CD4-positive, alpha-beta memory T cell (primary cell): ENCODE measurements at regions of chr7 and their contacts with region 1.

Region 1: DNA sequence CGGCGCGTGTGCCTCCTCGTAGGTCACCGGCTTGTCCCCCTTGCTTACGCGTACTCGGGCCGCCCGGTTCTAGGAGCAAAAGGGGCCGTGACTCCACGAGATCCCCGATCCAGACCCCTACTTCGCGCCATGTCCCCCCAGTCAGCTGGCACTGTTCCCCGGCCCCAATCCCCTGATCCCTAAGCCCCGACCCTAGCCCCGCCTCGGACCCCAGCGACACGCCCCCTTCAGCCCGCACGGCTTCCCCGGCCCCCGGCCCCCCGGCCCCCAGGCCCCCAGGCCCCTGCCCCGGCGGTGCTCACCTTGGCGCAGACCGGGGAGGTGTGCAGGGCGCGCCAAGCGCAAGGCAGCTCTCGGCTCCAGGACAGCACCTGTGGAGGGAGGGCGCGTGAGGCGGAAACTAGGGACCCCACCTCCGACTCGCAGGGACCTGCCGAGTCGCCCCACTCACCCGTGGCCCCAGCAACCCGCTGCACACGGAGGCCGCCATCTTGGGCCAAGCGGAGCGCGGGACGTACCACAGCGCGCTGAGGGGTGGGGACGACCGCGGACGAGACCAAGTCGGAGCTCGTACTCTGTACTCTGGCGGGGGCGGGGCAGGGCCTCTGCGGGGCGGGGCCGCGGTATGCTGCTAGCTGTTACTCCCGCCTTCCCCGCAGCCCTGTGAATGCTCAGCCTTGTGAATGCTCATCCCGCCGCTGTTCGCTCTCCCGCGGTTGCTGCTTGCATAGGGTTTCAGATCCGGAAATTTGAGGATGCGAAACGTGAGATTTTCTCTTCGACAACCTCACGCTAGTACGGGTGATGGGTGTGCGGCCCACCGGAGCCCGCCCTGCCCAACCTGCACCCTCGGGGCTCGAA is at the start of gene MRPS24:
- DNase-seq: peak; percentile 91 to 94 (median 91)
- H3K4me3 ChIP-seq: peak within 1 kb of the TSS; percentile 79 to 86
- H3K4me3 Mint-ChIP-seq: peak within 1 kb of the TSS; percentile 91 to 97 (median 93)
- H3K27ac ChIP-seq: peak within 1 kb of the TSS; percentile 54
- H3K27ac Mint-ChIP-seq: peak within 1 kb of the TSS; percentile 89 to 95 (median 94)
- H3K4me1 ChIP-seq: peaks cover 20% of the 10 kb centered on the region
- H3K4me1 Mint-ChIP-seq: peaks cover 8 to 31% (median 18%) of the 10 kb centered on the region in 4 donors
- H3K27me3 ChIP-seq: no peaks in the 10 kb centered on the region
- H3K27me3 Mint-ChIP-seq: no peaks in the 10 kb centered on the region
- total RNA-seq, gene MRPS24: 52.2 to 52.7 TPM

Region 2: GRCh38 chr7:43553999-43554398 is 315.2 kb before region 1 on chr7:
- CTCF ChIA-PET with region 1: no interaction called
- POLR2A ChIA-PET with region 1: no interaction called
- intact Hi-C with region 1: no loop called
- DNase-seq: peak in 2 of 5 donors; percentile 6 to 35
- H3K4me3 ChIP-seq: no peak overlapping the region
- H3K4me3 Mint-ChIP-seq: peak overlapping the region in 6 of 8 donors; percentile 4 to 84 (median 56)
- H3K27ac ChIP-seq: no peak overlapping the region
- H3K27ac Mint-ChIP-seq: peak overlapping the region in 3 of 7 donors; percentile 17 to 86 (median 72)
- H3K4me1 ChIP-seq: peaks cover 26% of the 10 kb centered on the region
- H3K4me1 Mint-ChIP-seq: peaks cover 15 to 29% (median 17%) of the 10 kb centered on the region in 4 donors
- H3K27me3 ChIP-seq: no peaks in the 10 kb centered on the region
- H3K27me3 Mint-ChIP-seq: peaks cover 7 to 8% of the 10 kb centered on the region in 2 donors

Region 3: DNA sequence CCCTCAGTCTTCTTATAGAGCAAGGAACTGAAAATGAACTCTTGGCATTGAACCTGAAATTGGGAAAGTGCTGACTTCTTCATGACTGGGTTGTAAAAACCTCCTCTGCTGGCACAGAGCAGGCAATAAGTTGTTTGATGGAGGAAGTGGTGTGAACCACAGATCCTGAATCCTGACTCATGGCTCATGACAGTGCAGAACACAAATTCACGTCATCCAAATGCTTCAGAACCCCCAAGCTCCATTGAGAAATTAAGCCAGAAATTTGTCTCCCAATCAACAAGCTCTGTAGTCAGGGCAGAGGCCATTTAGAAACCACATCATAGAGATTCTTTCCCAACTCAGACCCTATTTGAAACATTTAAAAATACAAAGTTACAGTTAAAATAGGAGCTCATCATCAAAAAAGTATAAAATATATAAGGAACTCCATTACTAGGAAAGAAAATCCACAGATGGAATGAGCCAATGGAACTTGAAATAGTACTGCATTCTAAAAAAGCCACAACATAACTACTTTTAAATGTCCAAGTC is 296.7 kb before region 1 on chr7:
- CTCF ChIA-PET with region 1: no interaction called
- POLR2A ChIA-PET with region 1: no interaction called
- intact Hi-C with region 1: no loop called
- DNase-seq: peak in 2 of 5 donors; percentile 21 to 46
- H3K4me3 ChIP-seq: no peak overlapping the region
- H3K4me3 Mint-ChIP-seq: no peak overlapping the region
- H3K27ac ChIP-seq: no peak overlapping the region
- H3K27ac Mint-ChIP-seq: peak overlapping the region in 2 of 7 donors; percentile 23 to 51
- H3K4me1 ChIP-seq: peaks cover 5% of the 10 kb centered on the region
- H3K4me1 Mint-ChIP-seq: peaks cover 3 to 5% (median 4%) of the 10 kb centered on the region in 4 donors
- H3K27me3 ChIP-seq: no peaks in the 10 kb centered on the region
- H3K27me3 Mint-ChIP-seq: no peaks in the 10 kb centered on the region

Region 4: GRCh38 chr7:43824963-43825362 is 44.3 kb before region 1 on chr7:
- CTCF ChIA-PET with region 1: no interaction called
- POLR2A ChIA-PET with region 1: no interaction called
- intact Hi-C with region 1: no loop called
- DNase-seq: no peak
- H3K4me3 ChIP-seq: no peak overlapping the region
- H3K4me3 Mint-ChIP-seq: no peak overlapping the region
- H3K27ac ChIP-seq: no peak overlapping the region
- H3K27ac Mint-ChIP-seq: no peak overlapping the region
- H3K4me1 ChIP-seq: no peaks in the 10 kb centered on the region
- H3K4me1 Mint-ChIP-seq: no peaks in the 10 kb centered on the region
- H3K27me3 ChIP-seq: no peaks in the 10 kb centered on the region
- H3K27me3 Mint-ChIP-seq: peaks cover 20 to 26% of the 10 kb centered on the region in 2 donors

Region 5: DNA sequence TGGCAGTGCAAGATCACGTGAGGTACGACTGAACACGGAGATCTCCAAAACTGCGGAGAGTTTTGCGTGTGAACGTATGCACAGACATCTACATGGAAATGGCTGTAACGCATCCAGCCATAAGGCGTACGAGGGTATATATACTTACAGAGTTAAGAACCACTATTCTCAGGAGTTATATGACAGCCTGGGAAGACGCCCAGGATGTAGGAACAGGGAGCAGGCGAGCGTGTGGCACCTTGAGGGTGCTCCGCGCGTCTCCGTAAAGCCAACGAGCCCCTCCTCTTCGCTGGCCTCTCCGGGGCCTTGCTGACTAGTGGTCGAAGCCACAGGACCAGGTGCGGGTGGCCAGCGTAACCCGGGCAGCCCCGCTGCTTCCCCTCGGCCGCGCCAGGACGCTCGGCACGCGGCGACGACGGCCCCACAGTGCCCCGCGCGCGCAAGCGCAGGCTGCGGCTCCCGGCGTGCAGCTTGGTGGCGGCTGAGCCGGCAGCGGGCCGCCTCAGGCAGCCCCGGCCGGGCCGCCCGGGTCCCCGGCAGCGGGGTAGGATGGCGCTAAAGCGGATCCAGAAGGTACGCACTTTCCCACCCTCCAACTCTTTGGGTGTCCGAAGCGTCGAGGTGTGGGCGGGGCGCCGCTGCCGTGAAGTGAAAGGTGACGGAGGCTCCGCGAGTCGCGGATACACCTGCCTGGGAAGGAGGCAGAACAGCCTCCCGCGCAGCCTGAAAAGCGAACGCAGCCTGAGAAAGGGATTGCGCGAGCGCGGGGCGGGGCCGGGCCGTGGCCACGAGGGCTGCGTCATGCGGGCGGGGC is 57.0 kb after region 1 on chr7 and contains the start of gene UBE2D4:
- CTCF ChIA-PET with region 1: no interaction called
- POLR2A ChIA-PET with region 1: interaction called, 15 read pairs
- intact Hi-C with region 1: loop called (anchors 1 kb)
- DNase-seq: peak; percentile 87 to 91 (median 90)
- H3K4me3 ChIP-seq: peak within 1 kb of the TSS; percentile 67 to 86
- H3K4me3 Mint-ChIP-seq: peak within 1 kb of the TSS; percentile 85 to 93 (median 90)
- H3K27ac ChIP-seq: peak within 1 kb of the TSS; percentile 76
- H3K27ac Mint-ChIP-seq: peak within 1 kb of the TSS; percentile 92 to 98 (median 97)
- H3K4me1 ChIP-seq: peaks cover 30% of the 10 kb centered on the region
- H3K4me1 Mint-ChIP-seq: peaks cover 15 to 38% (median 23%) of the 10 kb centered on the region in 4 donors
- H3K27me3 ChIP-seq: no peaks in the 10 kb centered on the region
- H3K27me3 Mint-ChIP-seq: no peaks in the 10 kb centered on the region
- total RNA-seq, gene UBE2D4: 10.9 to 11.0 TPM